ENCODE measurements at regions of chrX and their contacts with region 1.

Region 1: GRCh38 chrX:68828740-68829552 is at the start of gene EFNB1:
- DNase-seq: peak; percentile 92
- H3K4me3 ChIP-seq: peak within 1 kb of the TSS; percentile 73
- H3K27ac ChIP-seq: peak within 1 kb of the TSS; percentile 47
- H3K27me3 ChIP-seq: peaks cover 3% of the 10 kb centered on the region
- CTCF ChIP-seq: no peak
- polyA plus RNA-seq, gene EFNB1: 19.1 and 22.8 TPM in 2 replicates

Region 2: DNA sequence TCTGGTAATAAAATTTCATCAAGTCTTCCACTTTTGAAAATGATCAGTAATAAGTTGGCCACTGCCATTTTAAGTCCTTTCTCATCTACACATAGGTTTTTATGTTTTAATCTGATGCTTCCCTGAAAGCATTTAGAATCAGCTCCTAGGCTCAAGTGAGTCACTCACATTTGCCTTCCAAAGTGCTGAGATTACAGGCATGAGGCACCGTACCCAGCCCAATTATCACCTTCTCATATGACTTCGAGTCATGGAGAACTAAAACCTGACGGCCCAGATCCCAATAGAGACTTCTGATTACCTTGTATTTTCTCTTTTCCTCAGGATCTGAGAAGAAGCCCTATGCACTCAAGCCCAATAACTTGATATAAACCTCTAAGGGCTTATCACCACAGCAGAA is 536.5 kb before region 1 on chrX:
- CTCF ChIA-PET with region 1: no interaction called
- POLR2A ChIA-PET with region 1: no interaction called
- DNase-seq: no peak
- H3K4me3 ChIP-seq: no peak overlapping the region
- H3K27ac ChIP-seq: no peak overlapping the region
- H3K27me3 ChIP-seq: no peaks in the 10 kb centered on the region
- CTCF ChIP-seq: no peak

Region 3: GRCh38 chrX:69133921-69134542 is 305.1 kb after region 1 on chrX:
- CTCF ChIA-PET with region 1: interaction called, 19 read pairs
- POLR2A ChIA-PET with region 1: interaction called, 9 read pairs
- DNase-seq: peak; percentile 27
- H3K4me3 ChIP-seq: no peak overlapping the region
- H3K27ac ChIP-seq: no peak overlapping the region
- H3K27me3 ChIP-seq: no peaks in the 10 kb centered on the region
- CTCF ChIP-seq: peak; percentile 63

Region 4: GRCh38 chrX:69165087-69165651 is 336.2 kb after region 1 on chrX and contains the start of gene PJA1:
- CTCF ChIA-PET with region 1: interaction called, 15 read pairs
- POLR2A ChIA-PET with region 1: interaction called, 7 read pairs
- DNase-seq: no peak
- H3K4me3 ChIP-seq: peak within 1 kb of the TSS; percentile 81
- H3K27ac ChIP-seq: no peak within 1 kb of the TSS
- H3K27me3 ChIP-seq: peaks cover 2% of the 10 kb centered on the region
- CTCF ChIP-seq: no peak
- polyA plus RNA-seq, gene PJA1: 25.7 and 30.7 TPM in 2 replicates

Region 5: GRCh38 chrX:69231903-69232302 is 403.0 kb after region 1 on chrX:
- CTCF ChIA-PET with region 1: interaction called, 12 read pairs
- POLR2A ChIA-PET with region 1: interaction called, 8 read pairs
- DNase-seq: no peak
- H3K4me3 ChIP-seq: no peak overlapping the region
- H3K27ac ChIP-seq: no peak overlapping the region
- H3K27me3 ChIP-seq: no peaks in the 10 kb centered on the region
- CTCF ChIP-seq: no peak

Region 6: DNA sequence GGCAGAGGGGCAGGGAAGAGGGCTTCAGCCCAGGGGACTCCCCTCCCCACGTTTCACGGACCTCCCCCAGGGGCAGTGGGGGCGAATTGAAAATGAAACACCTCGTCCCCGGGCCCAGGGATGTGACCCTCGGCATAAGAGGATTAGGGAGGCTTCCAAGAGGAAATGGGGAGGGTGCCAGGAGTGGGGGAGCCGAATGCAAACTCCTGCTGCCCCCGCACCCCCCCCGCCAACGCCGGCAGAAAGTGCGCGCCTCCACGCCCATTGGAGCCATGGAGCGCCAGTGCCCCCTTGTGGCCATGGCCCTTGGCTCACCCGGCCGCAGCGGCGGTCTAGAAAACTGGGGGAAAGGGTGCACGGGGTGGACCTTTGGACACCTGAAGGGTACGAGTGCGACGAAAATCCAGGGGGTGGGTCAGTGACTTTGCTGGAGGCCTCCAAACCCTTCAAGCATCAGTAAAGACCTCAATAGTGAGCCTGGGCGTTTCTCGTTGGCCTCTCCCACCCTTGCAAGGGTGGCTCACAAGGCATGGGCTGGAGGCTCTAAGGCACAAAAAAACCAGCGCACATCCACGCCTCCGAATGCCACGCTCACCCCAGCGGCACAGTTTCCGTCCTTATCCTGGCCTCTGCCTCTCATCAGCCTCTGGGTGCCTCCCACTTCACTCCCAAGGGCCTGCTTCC is 457.1 kb after region 1 on chrX:
- CTCF ChIA-PET with region 1: interaction called, 56 read pairs
- POLR2A ChIA-PET with region 1: no interaction called
- DNase-seq: no peak
- H3K4me3 ChIP-seq: peak overlapping the region; percentile 55
- H3K27ac ChIP-seq: no peak overlapping the region
- H3K27me3 ChIP-seq: no peaks in the 10 kb centered on the region
- CTCF ChIP-seq: peak; percentile 77